Cardiac septum (tissue), 1 donor: ENCODE measurements at regions of chr2 and their contacts with region 1.

Region 1: DNA sequence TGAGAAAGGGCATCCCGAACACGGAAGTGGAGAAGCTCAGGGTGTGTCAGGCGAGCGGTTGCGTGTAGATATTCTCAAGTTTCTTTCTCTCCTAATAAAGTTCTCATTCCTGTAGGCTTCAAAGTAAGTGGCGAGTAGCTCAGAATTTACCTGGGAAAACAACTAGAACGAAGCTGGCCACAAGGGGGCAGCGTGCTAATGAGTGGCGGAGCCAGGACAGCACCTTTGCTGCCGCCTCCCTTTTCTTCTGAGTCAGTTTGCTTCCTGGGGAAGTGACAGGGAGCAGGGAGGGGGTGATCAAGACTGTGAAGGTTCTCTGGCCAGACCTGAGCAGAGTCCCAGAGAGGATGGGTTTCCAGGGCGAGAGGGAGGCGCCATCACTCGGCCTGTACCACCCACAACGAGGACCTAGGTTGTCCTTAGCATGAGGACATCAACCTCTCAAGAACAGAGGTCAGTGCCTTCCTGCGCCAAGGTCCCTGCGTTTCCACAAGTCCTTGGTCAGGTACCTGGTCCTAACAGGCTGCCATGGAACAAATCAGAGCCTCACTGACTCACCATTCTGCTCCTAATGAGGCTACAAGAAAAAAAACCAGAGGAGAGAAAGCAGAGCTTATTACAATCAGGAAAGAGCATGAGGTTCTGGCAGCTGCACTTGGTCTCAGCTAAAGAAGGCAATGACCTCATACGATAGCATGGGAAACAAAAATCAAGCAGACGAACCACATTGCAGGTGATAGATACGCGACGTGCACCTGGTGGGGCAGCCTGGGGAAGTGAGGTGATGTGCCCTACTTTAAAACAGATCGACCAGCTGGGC is 98.6 kb downstream of the PLB1 start:
- DNase-seq: peak; percentile 93

Region 2: GRCh38 chr2:28406276-28407096 is 188.0 kb before region 1 on chr2:
- intact Hi-C with region 1: no loop called
- DNase-seq: peak; percentile 83

Region 3: GRCh38 chr2:28544919-28545589 is 49.4 kb before region 1 on chr2:
- intact Hi-C with region 1: no loop called
- DNase-seq: no peak

Region 4: DNA sequence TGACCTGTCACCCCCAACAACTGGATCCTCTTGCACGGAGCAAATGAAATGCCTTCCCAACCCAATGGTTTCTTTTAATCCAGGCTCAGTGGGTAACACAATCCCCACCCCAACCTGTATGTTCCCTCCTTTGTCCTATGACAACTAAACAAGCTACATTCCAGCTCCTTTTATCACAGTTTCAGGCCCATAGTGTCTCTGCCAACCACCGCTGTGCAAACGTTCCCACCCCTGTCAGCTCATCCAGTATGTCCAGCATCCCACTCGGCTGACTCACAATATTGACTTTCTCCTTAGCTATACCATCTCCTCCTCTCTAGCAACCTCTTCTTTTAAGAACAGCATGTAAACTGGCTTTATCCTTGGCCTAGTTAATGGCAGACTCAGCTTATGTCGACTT is 39.2 kb after region 1 on chr2:
- intact Hi-C with region 1: loop called (anchors 2 kb)
- DNase-seq: peak; percentile 33

Region 5: GRCh38 chr2:28702415-28702861 is 107.9 kb after region 1 on chr2:
- intact Hi-C with region 1: loop called (anchors 5 kb)
- DNase-seq: peak; percentile 83

Region 6: DNA sequence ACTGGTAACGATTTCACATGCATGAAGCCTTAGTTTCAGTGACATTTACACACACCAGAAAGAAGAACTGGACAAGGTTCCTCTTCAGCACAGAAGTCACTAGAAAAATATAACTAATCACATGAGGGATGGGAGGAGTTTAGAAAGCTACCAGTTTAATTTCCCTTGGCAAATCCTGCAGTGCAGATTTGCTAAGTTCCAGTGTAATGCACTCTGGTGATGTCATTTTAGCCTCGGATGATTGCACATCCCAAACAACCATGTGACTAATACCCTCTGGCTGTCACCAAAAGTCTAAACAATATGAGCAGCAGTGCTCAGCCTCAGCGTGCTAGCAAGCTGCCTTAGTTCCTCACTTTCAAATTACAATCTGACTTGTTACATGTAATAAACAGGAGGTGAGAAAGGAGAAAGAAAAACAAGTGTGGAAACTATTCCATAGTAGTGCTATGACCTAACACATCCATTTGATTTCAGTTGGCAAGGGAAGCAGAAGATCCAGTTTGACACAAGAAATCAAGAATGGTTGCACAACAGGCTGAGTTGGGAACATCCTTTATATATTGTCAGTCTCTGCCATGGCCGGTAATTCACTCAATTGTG is 121.9 kb after region 1 on chr2:
- intact Hi-C with region 1: loop called (anchors 5 kb)
- DNase-seq: no peak

Region 7: GRCh38 chr2:28810384-28811285 is 216.1 kb after region 1 on chr2 and contains the start of gene SPDYA:
- intact Hi-C with region 1: loop called (anchors 10 kb)
- DNase-seq: peak; percentile 81
- total RNA-seq, gene SPDYA: 0.92 TPM

Region 8: GRCh38 chr2:28894470-28895177 is 300.1 kb after region 1 on chr2 and contains the start of gene WDR43:
- intact Hi-C with region 1: loop called (anchors 10 kb)
- DNase-seq: peak; percentile 99
- total RNA-seq, gene WDR43: 25.9 TPM